IMR-90 (cell line): ENCODE measurements at regions of chr9 and their contacts with region 1.

Region 1: GRCh38 chr9:16871356-16872151 is 1.1 kb upstream of the BNC2 start:
- DNase-seq: peak; percentile 88
- ATAC-seq: peak; percentile 50
- H3K4me3 ChIP-seq: peak overlapping the region; percentile 89
- H3K27ac ChIP-seq: peak overlapping the region; percentile 90
- H3K4me1 ChIP-seq: peaks cover 5% of the 10 kb centered on the region; the same call in 1 of the 2 replicates
- H3K27me3 ChIP-seq: no peaks in the 10 kb centered on the region
- CTCF ChIP-seq: no peak
- POLR2A ChIP-seq: peak; percentile 18; the same call in 1 of the 2 replicates
- RAD21 ChIP-seq: peak; percentile 1; the same call in 1 of the 2 replicates

Region 2: DNA sequence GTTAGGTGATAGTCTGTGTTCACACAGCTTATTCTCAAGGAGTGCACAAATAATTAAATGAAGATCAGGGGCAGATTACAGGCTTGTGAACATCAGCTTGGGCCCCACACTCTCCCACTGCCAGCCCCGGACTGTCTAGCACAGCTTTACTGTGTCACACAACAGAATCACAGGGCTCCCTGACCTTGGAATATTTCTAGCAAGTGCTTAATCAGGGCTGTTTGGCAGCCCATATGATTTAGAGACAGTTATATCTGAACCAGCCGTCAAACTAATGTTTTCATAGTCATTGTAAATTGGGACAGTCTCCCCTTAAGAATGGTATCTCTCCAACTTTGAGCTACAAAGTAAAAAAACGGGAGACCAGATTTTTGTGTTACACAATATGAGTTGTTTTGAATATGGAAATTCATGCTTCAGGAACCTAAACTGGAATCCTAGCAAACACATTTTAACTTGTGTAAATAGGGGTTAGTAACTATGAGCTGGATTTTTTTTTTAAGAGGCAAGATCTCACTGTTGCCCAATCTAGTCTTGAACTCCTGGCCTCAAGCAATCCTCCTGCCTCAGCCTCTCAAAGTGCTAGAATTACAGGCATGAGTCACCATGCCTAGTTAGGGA is 518.7 kb before region 1 on chr9:
- CTCF ChIA-PET with region 1: no interaction called
- POLR2A ChIA-PET with region 1: no interaction called
- dilution Hi-C with region 1: no loop called
- in situ Hi-C with region 1: no loop called
- intact Hi-C with region 1: loop called (anchors 10 kb)
- DNase-seq: peak; percentile 67
- ATAC-seq: peak; percentile 76
- H3K4me3 ChIP-seq: no peak overlapping the region
- H3K27ac ChIP-seq: peak overlapping the region; percentile 51; the same call in 1 of the 2 replicates
- H3K4me1 ChIP-seq: peaks cover 14% of the 10 kb centered on the region; the same call in 1 of the 2 replicates
- H3K27me3 ChIP-seq: no peaks in the 10 kb centered on the region
- CTCF ChIP-seq: no peak
- POLR2A ChIP-seq: no peak
- RAD21 ChIP-seq: no peak

Region 3: GRCh38 chr9:16598316-16598715 is 273.2 kb before region 1 on chr9:
- CTCF ChIA-PET with region 1: no interaction called
- POLR2A ChIA-PET with region 1: no interaction called
- dilution Hi-C with region 1: no loop called
- in situ Hi-C with region 1: no loop called
- intact Hi-C with region 1: loop called (anchors 10 kb)
- DNase-seq: peak; percentile 56
- ATAC-seq: peak; percentile 44; the same call in 1 of the 2 replicates
- H3K4me3 ChIP-seq: no peak overlapping the region
- H3K27ac ChIP-seq: no peak overlapping the region
- H3K4me1 ChIP-seq: peaks cover 3% of the 10 kb centered on the region; the same call in 1 of the 2 replicates
- H3K27me3 ChIP-seq: no peaks in the 10 kb centered on the region
- CTCF ChIP-seq: no peak
- POLR2A ChIP-seq: no peak
- RAD21 ChIP-seq: no peak

Region 4: DNA sequence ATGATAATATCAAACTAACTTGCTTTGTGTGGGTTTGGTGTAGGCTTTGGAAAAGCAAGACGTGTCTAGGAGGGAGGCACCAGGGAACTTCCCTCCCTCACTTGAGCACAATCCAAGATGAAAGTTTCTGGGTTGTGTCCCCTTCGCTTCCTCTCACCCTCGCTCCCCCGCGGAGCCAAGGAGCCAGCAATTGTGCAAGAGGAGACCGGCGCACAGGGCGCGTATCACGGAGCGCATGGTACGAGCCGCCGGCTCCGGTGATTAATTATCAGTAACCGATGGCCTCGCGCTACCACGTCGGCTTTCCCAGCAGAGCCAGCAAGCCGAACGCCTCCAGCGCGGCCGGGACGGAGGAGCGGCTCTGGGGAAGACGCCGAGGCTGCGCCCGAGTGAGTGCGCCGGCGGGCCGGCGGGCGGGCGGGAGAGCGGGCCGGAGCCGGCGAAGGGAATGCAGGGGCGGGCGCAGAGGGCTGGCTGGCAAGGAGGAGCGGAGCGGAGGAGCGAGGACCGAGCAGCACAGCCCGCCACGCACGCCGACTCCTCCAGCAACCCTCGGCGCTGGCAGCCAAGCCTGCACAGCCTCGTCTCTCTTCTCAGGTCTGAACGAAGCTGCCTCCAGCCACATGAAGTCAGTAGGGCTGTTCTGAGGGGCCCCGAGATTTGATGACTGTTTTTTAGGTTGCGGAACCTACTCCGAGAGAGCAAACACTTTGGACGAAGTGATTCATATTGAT is 144.7 kb before region 1 on chr9:
- CTCF ChIA-PET with region 1: no interaction called
- POLR2A ChIA-PET with region 1: interaction called, 3 read pairs
- dilution Hi-C with region 1: no loop called
- in situ Hi-C with region 1: no loop called
- intact Hi-C with region 1: loop called (anchors 2 kb)
- DNase-seq: peak; percentile 83
- ATAC-seq: peak; percentile 83
- H3K4me3 ChIP-seq: peak overlapping the region; percentile 62
- H3K27ac ChIP-seq: peak overlapping the region; percentile 97
- H3K4me1 ChIP-seq: peaks cover 12% of the 10 kb centered on the region
- H3K27me3 ChIP-seq: no peaks in the 10 kb centered on the region
- CTCF ChIP-seq: no peak
- POLR2A ChIP-seq: peak; percentile 72
- RAD21 ChIP-seq: no peak

Region 5: GRCh38 chr9:16964228-16964627 is 92.7 kb after region 1 on chr9:
- CTCF ChIA-PET with region 1: no interaction called
- POLR2A ChIA-PET with region 1: interaction called, 3 read pairs
- dilution Hi-C with region 1: no loop called
- in situ Hi-C with region 1: no loop called
- intact Hi-C with region 1: loop called (anchors 5 kb)
- DNase-seq: peak; percentile 100
- ATAC-seq: peak; percentile 99
- H3K4me3 ChIP-seq: no peak overlapping the region
- H3K27ac ChIP-seq: peak overlapping the region; percentile 96
- H3K4me1 ChIP-seq: peaks cover 10% of the 10 kb centered on the region
- H3K27me3 ChIP-seq: no peaks in the 10 kb centered on the region
- CTCF ChIP-seq: no peak
- POLR2A ChIP-seq: 0 out of 2 replicates have a peak, but pooled peaks have one; percentile 45
- RAD21 ChIP-seq: no peak; the same call in 1 of the 2 replicates

Region 6: DNA sequence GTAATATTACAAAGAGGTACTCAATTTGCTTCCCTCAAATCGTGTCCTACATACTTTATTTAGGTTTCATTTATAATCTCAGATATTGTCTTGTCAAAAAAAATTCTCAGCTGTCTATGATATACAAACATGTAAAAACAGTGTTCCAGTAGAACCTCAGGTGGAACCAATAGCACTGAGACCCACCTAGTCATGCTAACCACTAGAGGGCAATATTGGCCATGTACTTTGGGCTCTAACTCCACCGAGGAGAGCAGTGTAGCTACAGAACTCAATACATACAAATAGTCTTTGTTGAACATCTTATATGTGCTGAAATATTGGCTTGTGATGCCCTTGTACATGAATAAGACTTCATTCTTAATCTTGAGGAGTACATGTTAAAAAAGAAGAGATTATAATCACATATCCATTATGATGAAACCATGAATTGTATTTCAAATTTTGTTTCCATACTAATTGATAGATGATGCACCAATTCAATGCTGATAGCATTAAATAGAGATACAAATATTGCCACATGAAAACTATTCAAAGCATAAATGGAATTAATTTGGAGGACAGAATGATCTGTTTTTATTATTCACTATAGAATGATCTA is 192.1 kb after region 1 on chr9:
- CTCF ChIA-PET with region 1: no interaction called
- POLR2A ChIA-PET with region 1: no interaction called
- dilution Hi-C with region 1: no loop called
- in situ Hi-C with region 1: no loop called
- intact Hi-C with region 1: loop called (anchors 5 kb)
- DNase-seq: peak; percentile 64
- ATAC-seq: peak; percentile 93
- H3K4me3 ChIP-seq: no peak overlapping the region
- H3K27ac ChIP-seq: no peak overlapping the region
- H3K4me1 ChIP-seq: no peaks in the 10 kb centered on the region
- H3K27me3 ChIP-seq: no peaks in the 10 kb centered on the region
- CTCF ChIP-seq: peak; percentile 67
- POLR2A ChIP-seq: no peak
- RAD21 ChIP-seq: peak; percentile 73